Activated naive CD4-positive, alpha-beta T cell treated with anti-CD3 and anti-CD28 coated beads for 36 hours (primary cell): ENCODE measurements at regions of chr1 and their contacts with region 1.

Region 1: GRCh38 chr1:202998836-202999750 is 8.1 kb upstream of the TMEM183A start:
- DNase-seq: peak; percentile 83
- H3K4me3 Mint-ChIP-seq: peak overlapping the region; percentile 22
- H3K27ac Mint-ChIP-seq: no peak overlapping the region
- H3K4me1 Mint-ChIP-seq: peaks cover 4% of the 10 kb centered on the region
- H3K27me3 Mint-ChIP-seq: peaks cover 26% of the 10 kb centered on the region

Region 2: DNA sequence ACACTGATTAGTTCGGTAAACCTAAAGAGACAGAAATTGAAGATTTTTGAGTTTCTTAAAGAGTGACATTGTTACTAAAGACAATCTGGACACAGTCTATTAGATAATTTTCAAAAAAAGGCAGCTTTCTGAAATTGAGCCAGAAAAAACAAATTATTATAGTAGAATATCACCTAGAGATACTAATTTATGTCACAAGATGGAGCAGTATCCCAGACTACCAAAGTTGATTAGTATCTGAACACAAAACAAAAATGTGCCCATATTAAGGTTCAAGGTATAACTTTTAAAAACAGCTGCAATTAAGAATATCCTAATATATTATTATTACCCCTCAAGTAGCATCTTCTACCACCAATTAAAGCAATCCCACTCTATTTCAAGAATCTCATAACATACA is 248.3 kb before region 1 on chr1:
- CTCF ChIA-PET with region 1: interaction called, 7 read pairs
- intact Hi-C with region 1: loop called (anchors 1 kb)
- DNase-seq: no peak
- H3K4me3 Mint-ChIP-seq: no peak overlapping the region
- H3K27ac Mint-ChIP-seq: no peak overlapping the region
- H3K4me1 Mint-ChIP-seq: no peaks in the 10 kb centered on the region
- H3K27me3 Mint-ChIP-seq: no peaks in the 10 kb centered on the region

Region 3: GRCh38 chr1:202821452-202821851 is 177.6 kb before region 1 on chr1:
- CTCF ChIA-PET with region 1: no interaction called
- intact Hi-C with region 1: no loop called
- DNase-seq: no peak
- H3K4me3 Mint-ChIP-seq: no peak overlapping the region
- H3K27ac Mint-ChIP-seq: no peak overlapping the region
- H3K4me1 Mint-ChIP-seq: no peaks in the 10 kb centered on the region
- H3K27me3 Mint-ChIP-seq: no peaks in the 10 kb centered on the region

Region 4: GRCh38 chr1:202888531-202889360 is 110.3 kb before region 1 on chr1 and contains the start of gene RABIF:
- CTCF ChIA-PET with region 1: interaction called, 5 read pairs
- intact Hi-C with region 1: loop called (anchors 1 kb)
- DNase-seq: peak; percentile 97
- H3K4me3 Mint-ChIP-seq: peak within 1 kb of the TSS; percentile 94
- H3K27ac Mint-ChIP-seq: peak within 1 kb of the TSS; percentile 96
- H3K4me1 Mint-ChIP-seq: peaks cover 24% of the 10 kb centered on the region
- H3K27me3 Mint-ChIP-seq: no peaks in the 10 kb centered on the region
- total RNA-seq, gene RABIF: 5.9 to 6.2 TPM

Region 5: DNA sequence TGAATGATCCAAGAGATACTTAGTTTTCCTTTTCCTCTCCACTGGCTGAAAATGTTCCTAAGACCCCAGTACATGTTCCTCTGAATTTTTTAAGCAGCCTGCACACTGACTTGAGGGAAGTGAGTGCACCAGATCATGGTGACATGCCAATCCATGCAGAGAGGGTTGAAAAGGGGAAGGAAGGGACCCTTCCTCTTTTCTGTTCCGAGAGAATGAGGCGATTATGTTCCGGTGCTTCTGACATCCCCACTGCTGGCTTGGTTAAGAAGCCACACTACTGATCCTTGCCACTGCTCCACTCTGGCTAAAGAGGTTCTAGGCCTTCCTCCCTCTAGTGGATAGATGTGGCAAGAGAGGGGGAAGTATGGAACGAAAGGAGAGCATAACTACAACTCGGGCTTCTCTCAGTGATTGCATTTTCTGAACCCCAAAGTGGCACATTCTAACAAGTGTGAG is 30.2 kb before region 1 on chr1:
- CTCF ChIA-PET with region 1: interaction called, 9 read pairs
- intact Hi-C with region 1: loop called (anchors 2 kb)
- DNase-seq: peak; percentile 56
- H3K4me3 Mint-ChIP-seq: no peak overlapping the region
- H3K27ac Mint-ChIP-seq: no peak overlapping the region
- H3K4me1 Mint-ChIP-seq: peaks cover 28% of the 10 kb centered on the region
- H3K27me3 Mint-ChIP-seq: no peaks in the 10 kb centered on the region